ENCODE measurements at regions of chr1 and their contacts with region 1.

Region 1: DNA sequence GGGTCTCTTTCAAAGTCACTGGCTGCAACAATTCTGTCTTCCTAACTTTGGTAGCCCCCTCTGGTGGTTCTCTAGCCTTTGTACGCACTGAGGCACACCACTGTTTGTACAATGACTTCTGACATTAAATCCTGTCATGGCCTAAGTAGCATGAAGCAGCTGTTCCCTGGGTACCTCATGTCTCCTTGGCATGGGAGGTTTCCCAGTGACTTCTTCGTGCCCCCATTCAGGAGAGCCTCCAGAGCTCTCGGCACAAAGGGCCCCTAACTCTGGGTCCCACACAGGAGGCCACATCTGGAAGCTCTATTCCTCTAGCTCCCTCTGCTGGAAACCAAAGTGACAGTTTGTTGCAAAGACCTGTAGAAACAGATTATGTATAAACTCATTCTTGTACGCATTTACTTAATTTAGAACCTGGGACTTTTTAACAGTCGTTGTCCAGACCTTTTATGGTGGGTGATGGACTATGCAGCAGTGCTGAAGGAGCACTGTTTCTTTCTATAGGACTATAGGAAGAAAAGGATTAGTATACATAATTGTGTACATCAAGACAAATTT is 13.4 kb downstream of the SWT1 start:
- DNase-seq: peak; percentile 69
- H3K4me3 ChIP-seq: peak overlapping the region in 1 of 2 experiments; percentile 10; a peak in 1 of 4 replicates
- H3K27ac ChIP-seq: no peak overlapping the region
- H3K4me1 ChIP-seq: peaks cover 0 to 2% of the 10 kb centered on the region in 2 experiments; a peak in 1 of 4 replicates
- H3K27me3 ChIP-seq: no peaks in the 10 kb centered on the region
- CTCF ChIP-seq: peak; percentile 89
- EP300 ChIP-seq: no peak
- RAD21 ChIP-seq: peak; percentile 68

Region 2: GRCh38 chr1:184792450-184792969 is 377.9 kb before region 1 on chr1:
- CTCF ChIA-PET with region 1: interaction called, 16 read pairs
- POLR2A ChIA-PET with region 1: no interaction called
- DNase-seq: no peak
- H3K4me3 ChIP-seq: peak overlapping the region in 1 of 2 experiments; percentile 40; a peak in 2 of 4 replicates
- H3K27ac ChIP-seq: peak overlapping the region; percentile 78 to 99
- H3K4me1 ChIP-seq: peaks cover 11 to 27% of the 10 kb centered on the region in 2 experiments
- H3K27me3 ChIP-seq: no peaks in the 10 kb centered on the region
- CTCF ChIP-seq: no peak
- EP300 ChIP-seq: peak; percentile 90 to 99
- RAD21 ChIP-seq: no peak

Region 3: GRCh38 chr1:184982002-184982954 is 188.1 kb before region 1 on chr1:
- CTCF ChIA-PET with region 1: interaction called, 19 read pairs
- POLR2A ChIA-PET with region 1: no interaction called
- DNase-seq: peak; percentile 65
- H3K4me3 ChIP-seq: no peak overlapping the region
- H3K27ac ChIP-seq: no peak overlapping the region; a peak in 1 of 4 replicates
- H3K4me1 ChIP-seq: no peaks in the 10 kb centered on the region
- H3K27me3 ChIP-seq: no peaks in the 10 kb centered on the region
- CTCF ChIP-seq: peak; percentile 93
- EP300 ChIP-seq: no peak
- RAD21 ChIP-seq: peak; percentile 83

Region 4: DNA sequence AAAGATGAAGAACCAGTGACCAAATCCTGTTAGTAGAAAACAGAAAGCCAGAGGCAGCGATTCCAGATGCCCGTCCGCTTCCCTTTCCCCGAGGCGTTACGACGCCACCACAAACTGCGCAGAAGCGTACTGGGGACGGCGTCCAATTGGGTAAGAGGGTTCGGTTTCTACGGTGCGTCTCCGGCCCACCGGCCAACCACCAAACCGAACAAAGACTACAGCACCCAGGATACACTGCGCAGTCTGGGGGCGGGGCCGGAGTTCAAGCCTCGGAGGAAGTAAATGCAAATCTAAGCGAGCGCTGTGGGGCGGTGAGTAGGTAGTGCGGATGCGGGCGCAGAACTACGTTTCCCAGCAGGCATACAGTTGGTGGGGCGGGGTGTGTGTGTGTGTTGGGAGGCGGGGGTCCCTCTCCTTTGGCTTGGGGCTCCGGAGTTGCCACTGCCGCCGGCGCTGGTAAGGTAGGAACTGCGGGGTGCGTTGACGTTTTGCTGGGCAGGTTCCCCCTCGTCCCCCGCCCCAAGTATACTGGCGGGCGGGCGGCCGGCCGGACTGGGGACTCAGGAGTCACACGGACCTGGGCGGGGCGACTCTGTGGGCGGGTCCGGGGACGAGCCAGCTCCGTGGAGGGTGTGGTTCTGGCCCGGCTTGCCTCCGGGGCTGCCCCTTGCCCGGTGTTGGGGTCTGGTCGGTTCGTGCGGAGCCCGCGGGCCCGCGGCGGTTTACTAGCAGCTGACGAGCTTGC is 13.3 kb before region 1 on chr1 and contains the starts of genes SWT1 and TRMT1L:
- CTCF ChIA-PET with region 1: interaction called, 75 read pairs
- POLR2A ChIA-PET with region 1: no interaction called
- DNase-seq: peak; percentile 92
- H3K4me3 ChIP-seq: peak within 1 kb of the TSS; percentile 92 to 94
- H3K27ac ChIP-seq: peak within 1 kb of the TSS; percentile 93 to 100
- H3K4me1 ChIP-seq: peaks cover 8 to 23% of the 10 kb centered on the region in 2 experiments; a peak in 3 of 4 replicates
- H3K27me3 ChIP-seq: no peaks in the 10 kb centered on the region
- CTCF ChIP-seq: no peak
- EP300 ChIP-seq: no peak
- RAD21 ChIP-seq: no peak
- polyA plus RNA-seq, gene SWT1: 1.1 and 1.6 TPM in 2 replicates
- polyA plus RNA-seq, gene TRMT1L: 12.2 and 13.0 TPM in 2 replicates

Region 5: DNA sequence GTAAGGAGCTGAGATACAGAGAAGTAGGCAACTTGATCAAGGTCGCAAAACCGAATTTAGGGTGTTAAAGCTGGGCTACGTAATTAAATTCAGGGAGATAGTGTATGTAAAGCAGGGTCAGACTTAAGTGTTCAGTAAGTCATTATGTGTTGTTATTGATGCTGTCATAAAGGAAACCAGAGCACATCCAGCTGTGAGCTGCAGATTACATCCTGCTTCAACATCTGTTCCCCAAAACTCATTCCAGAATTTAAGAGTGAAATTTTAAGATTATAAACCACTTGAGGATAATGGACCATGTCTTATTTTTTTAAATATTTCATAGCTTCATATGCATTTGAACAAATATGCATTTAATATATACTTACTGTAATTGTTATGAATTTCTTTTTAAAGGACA is 96.9 kb after region 1 on chr1:
- CTCF ChIA-PET with region 1: no interaction called
- POLR2A ChIA-PET with region 1: no interaction called
- DNase-seq: no peak
- H3K4me3 ChIP-seq: no peak overlapping the region
- H3K27ac ChIP-seq: no peak overlapping the region
- H3K4me1 ChIP-seq: no peaks in the 10 kb centered on the region; a peak in 2 of 4 replicates
- H3K27me3 ChIP-seq: no peaks in the 10 kb centered on the region
- CTCF ChIP-seq: no peak
- EP300 ChIP-seq: no peak
- RAD21 ChIP-seq: no peak

Measured in SK-N-SH (cell line).